ENCODE measurements at regions of chr18 and their contacts with region 1.

Region 1: GRCh38 chr18:3245853-3246634 is 1.6 kb upstream of the MYL12A start:
- DNase-seq: peak in 1 of 2 donors; percentile 95
- H3K4me3 ChIP-seq: peak overlapping the region; percentile 93 to 98
- H3K27ac ChIP-seq: peak overlapping the region; percentile 98
- H3K4me1 ChIP-seq: peaks cover 39% of the 10 kb centered on the region
- H3K27me3 ChIP-seq: no peaks in the 10 kb centered on the region
- CTCF ChIP-seq: peak; percentile 79 to 88 (median 87)
- POLR2A ChIP-seq: no peak

Region 2: DNA sequence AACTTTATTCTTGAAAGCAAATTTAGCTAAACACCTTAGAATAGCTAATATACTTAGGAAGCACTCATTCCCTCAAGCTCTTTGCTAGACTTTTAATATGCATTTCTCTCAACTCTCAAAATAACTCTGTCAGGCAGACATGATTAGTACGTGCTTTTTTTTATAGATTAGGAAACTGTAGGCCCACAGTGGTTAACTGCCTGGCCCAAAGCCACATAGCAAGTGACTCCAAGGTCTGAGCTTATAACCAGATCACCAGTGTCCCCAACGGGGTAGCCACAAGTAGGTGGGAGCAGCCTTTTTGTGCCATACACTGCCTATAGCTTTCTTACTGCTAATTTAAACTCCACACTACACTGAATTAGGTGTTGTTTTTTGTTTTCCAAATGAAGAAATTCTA is 1251.6 kb before region 1 on chr18:
- intact Hi-C with region 1: no loop called
- DNase-seq: no peak
- H3K4me3 ChIP-seq: no peak overlapping the region
- H3K27ac ChIP-seq: no peak overlapping the region
- H3K4me1 ChIP-seq: no peaks in the 10 kb centered on the region
- H3K27me3 ChIP-seq: no peaks in the 10 kb centered on the region
- CTCF ChIP-seq: no peak
- POLR2A ChIP-seq: no peak

Region 3: DNA sequence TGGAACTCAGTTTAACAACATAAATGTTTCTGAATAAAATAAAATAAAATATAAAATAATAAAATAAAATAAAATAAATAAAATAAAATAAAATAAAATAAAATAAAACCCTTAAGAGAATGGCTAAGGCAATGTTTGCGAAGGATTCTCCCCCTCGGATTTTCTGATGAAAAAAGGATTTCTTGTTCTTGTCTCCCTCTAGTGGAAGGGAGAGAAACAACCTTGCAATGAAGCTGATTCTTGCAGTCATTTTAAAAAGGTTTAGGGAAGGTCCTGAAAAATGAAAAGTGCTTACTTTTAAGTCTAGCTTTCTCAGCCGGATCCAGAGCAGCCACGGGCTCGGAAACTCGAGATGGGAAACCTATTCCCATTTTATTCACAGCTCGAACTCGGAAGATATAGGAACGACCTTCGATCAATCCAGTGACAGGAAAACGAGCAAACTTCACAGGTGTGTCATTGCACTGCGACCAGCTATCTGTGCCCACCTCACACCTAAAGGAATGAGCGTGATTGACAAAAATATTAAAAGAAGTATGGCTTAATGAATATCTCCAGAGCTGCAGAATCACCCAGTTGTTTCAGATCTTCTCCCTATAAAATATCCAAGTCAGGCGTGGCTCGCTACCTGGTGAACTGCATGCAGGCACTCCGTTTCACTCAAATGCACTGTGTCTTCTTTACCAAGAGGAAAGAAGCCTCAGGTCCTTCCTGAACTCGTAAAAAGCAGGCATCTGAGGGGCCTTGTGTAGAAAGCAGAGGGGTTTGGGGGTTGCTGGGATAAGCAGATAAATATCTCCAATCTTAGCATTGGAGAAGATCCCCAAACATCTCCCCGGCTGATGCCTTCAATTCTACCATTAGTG is 94.4 kb before region 1 on chr18:
- intact Hi-C with region 1: loop called (anchors 10 kb)
- DNase-seq: no peak
- H3K4me3 ChIP-seq: no peak overlapping the region
- H3K27ac ChIP-seq: no peak overlapping the region
- H3K4me1 ChIP-seq: peaks cover 7% of the 10 kb centered on the region
- H3K27me3 ChIP-seq: no peaks in the 10 kb centered on the region
- CTCF ChIP-seq: peak; percentile 21 to 65 (median 41)
- POLR2A ChIP-seq: no peak

Region 4: GRCh38 chr18:3852321-3852720 is 606.3 kb after region 1 on chr18:
- intact Hi-C with region 1: no loop called
- DNase-seq: no peak
- H3K4me3 ChIP-seq: no peak overlapping the region
- H3K27ac ChIP-seq: no peak overlapping the region
- H3K4me1 ChIP-seq: no peaks in the 10 kb centered on the region
- H3K27me3 ChIP-seq: no peaks in the 10 kb centered on the region
- CTCF ChIP-seq: no peak
- POLR2A ChIP-seq: no peak